ENCODE measurements at regions of chr16 and their contacts with region 1.

Region 1: GRCh38 chr16:23877107-23878090 is 41.6 kb downstream of the PRKCB start:
- DNase-seq: no peak
- ATAC-seq: no peak
- H3K4me3 ChIP-seq: no peak overlapping the region
- H3K27ac ChIP-seq: no peak overlapping the region
- H3K4me1 ChIP-seq: no peaks in the 10 kb centered on the region
- H3K27me3 ChIP-seq: no peaks in the 10 kb centered on the region

Region 2: GRCh38 chr16:23753908-23754593 is 123.3 kb before region 1 on chr16:
- intact Hi-C with region 1: no loop called
- DNase-seq: no peak
- ATAC-seq: no peak
- H3K4me3 ChIP-seq: no peak overlapping the region
- H3K27ac ChIP-seq: no peak overlapping the region
- H3K4me1 ChIP-seq: no peaks in the 10 kb centered on the region
- H3K27me3 ChIP-seq: no peaks in the 10 kb centered on the region

Region 3: GRCh38 chr16:23770744-23771426 is 106.5 kb before region 1 on chr16:
- intact Hi-C with region 1: no loop called
- DNase-seq: no peak
- ATAC-seq: no peak
- H3K4me3 ChIP-seq: no peak overlapping the region
- H3K27ac ChIP-seq: no peak overlapping the region
- H3K4me1 ChIP-seq: no peaks in the 10 kb centered on the region
- H3K27me3 ChIP-seq: no peaks in the 10 kb centered on the region

Region 4: DNA sequence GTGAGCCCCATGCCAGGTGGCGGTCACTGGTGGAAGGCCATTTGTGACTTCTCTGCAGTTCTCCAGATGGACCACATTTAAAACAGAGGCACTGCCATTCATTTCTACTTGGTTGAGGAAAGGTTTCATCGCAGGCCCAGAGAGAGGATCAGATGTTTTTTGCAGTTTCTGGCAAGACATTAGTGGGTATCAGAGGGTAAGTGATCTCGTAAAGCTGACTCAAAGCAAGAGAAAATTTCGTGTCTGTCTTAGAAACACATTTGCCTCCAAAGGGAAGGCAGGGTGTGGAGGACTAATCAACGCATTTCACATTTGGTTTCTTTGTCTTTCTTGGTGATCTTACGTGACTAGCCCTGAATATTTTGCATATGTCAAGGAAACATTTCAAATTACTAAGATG is 40.2 kb after region 1 on chr16:
- intact Hi-C with region 1: loop called in 1 of 2 experiments (anchors 5 kb)
- DNase-seq: no peak
- ATAC-seq: no peak
- H3K4me3 ChIP-seq: no peak overlapping the region
- H3K27ac ChIP-seq: no peak overlapping the region
- H3K4me1 ChIP-seq: no peaks in the 10 kb centered on the region
- H3K27me3 ChIP-seq: no peaks in the 10 kb centered on the region

Region 5: DNA sequence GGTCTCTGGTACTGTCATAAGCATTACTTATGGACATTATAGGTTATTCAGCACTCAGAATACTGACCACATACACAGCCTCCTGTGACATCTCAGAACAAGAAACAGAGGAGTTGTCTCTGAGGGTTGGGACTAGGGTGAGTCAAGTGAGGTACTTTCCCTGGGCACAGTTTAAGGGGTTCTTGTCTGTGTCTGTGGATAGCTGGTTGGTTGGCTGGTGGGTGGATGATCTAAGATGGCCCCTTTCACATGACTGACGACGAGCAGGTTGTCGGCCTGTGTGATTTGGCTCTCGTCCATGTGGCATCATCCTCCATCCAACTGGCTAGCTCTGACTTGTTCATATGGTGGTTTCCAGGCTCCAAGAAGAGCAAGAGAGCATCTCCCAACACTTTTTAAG is 122.3 kb after region 1 on chr16:
- intact Hi-C with region 1: loop called in 1 of 2 experiments (anchors 10 kb)
- DNase-seq: no peak
- ATAC-seq: no peak
- H3K4me3 ChIP-seq: no peak overlapping the region
- H3K27ac ChIP-seq: no peak overlapping the region
- H3K4me1 ChIP-seq: no peaks in the 10 kb centered on the region
- H3K27me3 ChIP-seq: peaks cover 0 to 2% of the 10 kb centered on the region in 2 donors

Region 6: GRCh38 chr16:24010440-24011089 is 133.2 kb after region 1 on chr16:
- intact Hi-C with region 1: loop called in 1 of 2 experiments (anchors 10 kb)
- DNase-seq: peak; percentile 81
- ATAC-seq: peak; percentile 52
- H3K4me3 ChIP-seq: no peak overlapping the region
- H3K27ac ChIP-seq: no peak overlapping the region
- H3K4me1 ChIP-seq: no peaks in the 10 kb centered on the region
- H3K27me3 ChIP-seq: no peaks in the 10 kb centered on the region